Activated CD4-positive, alpha-beta T cell treated with anti-CD3 and anti-CD28 coated beads, Interleukin-2, amount 10 ng/mL, durations not matched to agents 24 days and 14 days (primary cell): ENCODE measurements at regions of chr19 and their contacts with region 1.

Region 1: GRCh38 chr19:21505459-21506451 is at the start of gene ZNF429:
- DNase-seq: peak; percentile 97
- H3K4me3 Mint-ChIP-seq: peak within 1 kb of the TSS; percentile 99
- H3K27ac Mint-ChIP-seq: peak within 1 kb of the TSS; percentile 96
- H3K4me1 Mint-ChIP-seq: peaks cover 3% of the 10 kb centered on the region
- H3K27me3 Mint-ChIP-seq: no peaks in the 10 kb centered on the region
- total RNA-seq, gene ZNF429: 3.0 and 3.3 TPM in 2 replicates

Region 2: GRCh38 chr19:20923077-20923871 is 582.5 kb before region 1 on chr19 and contains the start of gene ZNF85:
- intact Hi-C with region 1: loop called (anchors 1 kb)
- DNase-seq: peak; percentile 96
- H3K4me3 Mint-ChIP-seq: peak within 1 kb of the TSS; percentile 98
- H3K27ac Mint-ChIP-seq: peak within 1 kb of the TSS; percentile 98
- H3K4me1 Mint-ChIP-seq: peaks cover 9% of the 10 kb centered on the region
- H3K27me3 Mint-ChIP-seq: no peaks in the 10 kb centered on the region
- total RNA-seq, gene ZNF85: 9.9 and 11.9 TPM in 2 replicates

Region 3: DNA sequence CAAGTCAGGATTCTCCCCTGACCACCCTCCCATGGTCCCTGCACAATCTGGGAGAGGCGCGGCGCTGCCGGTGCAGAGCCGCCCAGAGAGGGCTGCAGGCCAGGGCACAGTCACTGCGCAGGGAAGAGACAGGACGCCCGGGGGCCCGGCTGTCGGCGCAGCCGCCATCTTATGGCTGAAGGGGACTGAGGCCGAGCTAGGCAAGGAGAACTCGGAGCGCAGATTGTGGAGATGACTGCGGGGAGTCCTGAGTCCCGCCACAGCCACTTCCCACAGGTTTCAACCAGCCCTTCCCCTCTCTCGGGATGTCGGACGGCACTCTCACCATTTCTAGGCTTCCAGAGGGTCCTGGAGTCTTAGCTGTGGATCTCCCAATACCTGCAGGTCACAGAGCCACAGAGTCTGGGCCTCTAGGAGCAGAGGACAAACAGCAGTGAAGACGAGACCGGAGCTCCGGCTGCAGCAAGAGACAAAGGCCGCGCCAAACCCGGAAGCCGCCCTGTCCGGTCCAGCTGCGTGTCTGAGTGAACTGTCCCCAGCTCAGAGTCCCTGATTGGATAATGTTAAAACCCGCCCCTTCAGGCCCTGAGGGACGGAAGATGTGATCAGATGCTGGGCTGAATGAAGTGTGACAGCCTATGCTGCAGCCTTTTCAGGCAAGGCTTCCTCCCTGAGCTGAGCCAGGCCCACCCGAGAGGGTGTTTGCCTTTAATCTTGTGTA is 176.7 kb before region 1 on chr19 and contains the start of gene ZNF708:
- intact Hi-C with region 1: loop called (anchors 2 kb)
- DNase-seq: peak; percentile 94
- H3K4me3 Mint-ChIP-seq: peak within 1 kb of the TSS; percentile 94
- H3K27ac Mint-ChIP-seq: peak within 1 kb of the TSS; percentile 100
- H3K4me1 Mint-ChIP-seq: peaks cover 17% of the 10 kb centered on the region
- H3K27me3 Mint-ChIP-seq: no peaks in the 10 kb centered on the region
- total RNA-seq, gene ZNF708: 10.1 TPM in 2 replicates

Region 4: GRCh38 chr19:21482863-21483276 is 22.9 kb before region 1 on chr19:
- intact Hi-C with region 1: no loop called
- DNase-seq: peak; percentile 81
- H3K4me3 Mint-ChIP-seq: no peak overlapping the region
- H3K27ac Mint-ChIP-seq: no peak overlapping the region
- H3K4me1 Mint-ChIP-seq: no peaks in the 10 kb centered on the region
- H3K27me3 Mint-ChIP-seq: no peaks in the 10 kb centered on the region

Region 5: GRCh38 chr19:21519488-21519887 is 13.7 kb after region 1 on chr19:
- intact Hi-C with region 1: no loop called
- DNase-seq: no peak
- H3K4me3 Mint-ChIP-seq: no peak overlapping the region
- H3K27ac Mint-ChIP-seq: no peak overlapping the region
- H3K4me1 Mint-ChIP-seq: no peaks in the 10 kb centered on the region
- H3K27me3 Mint-ChIP-seq: no peaks in the 10 kb centered on the region

Region 6: GRCh38 chr19:21568816-21569493 is 63.2 kb after region 1 on chr19:
- intact Hi-C with region 1: loop called (anchors 2 kb)
- DNase-seq: peak; percentile 93
- H3K4me3 Mint-ChIP-seq: peak overlapping the region; percentile 89
- H3K27ac Mint-ChIP-seq: peak overlapping the region; percentile 92
- H3K4me1 Mint-ChIP-seq: peaks cover 3% of the 10 kb centered on the region
- H3K27me3 Mint-ChIP-seq: no peaks in the 10 kb centered on the region

Region 7: DNA sequence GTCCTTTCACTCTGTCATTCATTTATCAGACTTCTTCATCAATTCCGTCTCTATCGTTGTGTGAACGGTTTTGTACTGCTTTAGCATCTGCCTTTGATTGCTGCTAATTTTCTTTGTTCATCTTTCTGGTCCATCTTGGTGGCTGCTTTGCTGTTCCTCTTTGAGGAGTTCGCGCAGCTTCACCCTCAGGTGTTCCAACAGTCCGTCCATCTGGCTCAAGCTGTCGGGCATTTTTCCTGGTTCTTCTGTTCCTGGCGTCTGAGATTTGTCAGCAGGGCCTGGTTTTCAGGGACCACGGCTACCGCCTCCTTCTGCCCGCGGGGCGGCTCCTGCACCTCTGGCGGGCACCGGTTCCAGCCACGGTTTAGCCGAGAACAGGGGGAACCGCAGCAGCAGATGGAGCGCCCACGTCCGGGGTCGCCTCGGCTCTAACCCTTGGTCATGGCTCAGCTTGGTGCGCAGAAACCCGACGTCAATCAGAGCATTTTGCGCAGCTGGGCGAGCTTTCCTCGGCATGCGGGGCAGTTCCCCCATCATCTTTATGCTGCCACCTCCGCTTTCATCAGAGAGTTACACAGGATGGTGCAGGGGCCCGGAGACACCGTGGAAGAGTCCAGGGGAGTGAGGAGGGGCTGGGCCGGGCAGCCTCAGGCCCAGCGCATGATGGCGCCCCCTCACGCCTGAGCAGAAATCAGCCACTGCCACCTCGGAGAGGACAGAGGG is 172.1 kb after region 1 on chr19:
- intact Hi-C with region 1: no loop called
- DNase-seq: no peak
- H3K4me3 Mint-ChIP-seq: peak overlapping the region; percentile 34
- H3K27ac Mint-ChIP-seq: no peak overlapping the region
- H3K4me1 Mint-ChIP-seq: no peaks in the 10 kb centered on the region
- H3K27me3 Mint-ChIP-seq: no peaks in the 10 kb centered on the region

Region 8: GRCh38 chr19:21851596-21852345 is 346.0 kb after region 1 on chr19:
- intact Hi-C with region 1: loop called (anchors 5 kb)
- DNase-seq: peak; percentile 95
- H3K4me3 Mint-ChIP-seq: peak overlapping the region; percentile 92
- H3K27ac Mint-ChIP-seq: peak overlapping the region; percentile 93
- H3K4me1 Mint-ChIP-seq: peaks cover 11% of the 10 kb centered on the region
- H3K27me3 Mint-ChIP-seq: no peaks in the 10 kb centered on the region